Dorsolateral prefrontal cortex (tissue), 120 donors: ENCODE measurements at regions of chr7 and their contacts with region 1.

Region 1: DNA sequence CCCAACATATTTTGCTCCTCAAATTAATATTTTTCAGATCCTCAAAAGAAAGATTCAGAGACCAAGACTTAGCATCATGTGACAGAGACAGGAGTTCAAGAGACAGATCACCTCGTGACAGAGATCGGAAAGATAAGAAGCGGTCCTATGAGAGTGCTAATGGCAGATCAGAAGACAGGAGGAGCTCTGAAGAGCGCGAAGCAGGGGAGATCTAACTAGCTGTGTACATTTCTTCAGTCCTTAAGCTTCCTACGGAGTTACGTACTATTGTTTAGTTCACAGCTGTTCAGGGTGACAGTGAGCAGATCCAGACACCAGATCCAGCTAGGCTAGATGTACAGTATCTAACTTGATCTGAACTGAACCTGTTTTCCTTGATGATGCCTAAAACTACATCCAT is 61.3 kb downstream of the KLRG2 start:
- DNase-seq: no peak
- H3K4me3 ChIP-seq: peak overlapping the region in 2 of 59 donors; percentile 16 to 17
- H3K27ac ChIP-seq: peak overlapping the region in 58 of 59 donors; percentile 46 to 96 (median 86)
- H3K27me3 ChIP-seq: no peaks in the 10 kb centered on the region
- CTCF ChIP-seq: peak in 10 of 56 donors; percentile 3 to 38 (median 13)

Region 2: DNA sequence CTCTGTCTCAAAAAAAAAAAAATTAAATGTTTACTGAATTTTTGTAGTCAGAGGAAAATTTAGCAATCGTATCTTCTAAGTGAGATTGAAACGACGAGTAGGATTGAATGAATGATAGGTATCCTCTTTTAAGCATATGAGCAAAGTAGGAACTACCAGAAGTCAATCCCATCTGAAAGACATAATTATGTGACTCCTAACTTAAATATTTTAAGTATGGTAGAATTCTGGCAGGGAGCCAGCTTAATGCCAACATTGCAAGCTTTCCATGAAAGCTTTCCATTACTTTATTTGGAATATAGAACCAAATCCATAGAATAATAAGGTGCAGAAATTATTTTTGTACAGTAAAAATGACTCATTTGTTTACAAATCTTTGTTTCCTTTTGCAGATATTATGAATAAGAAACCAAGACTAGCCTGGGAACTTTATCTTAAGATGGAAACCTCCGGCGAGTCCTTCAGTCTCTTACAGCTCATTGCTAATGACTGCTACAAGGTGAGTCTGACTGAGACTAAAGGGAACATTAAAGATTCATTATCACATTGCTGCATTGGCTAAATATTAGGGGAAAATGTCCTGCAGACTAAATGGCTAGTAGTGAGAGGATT is 241.3 kb before region 1 on chr7:
- intact Hi-C with region 1: no loop called
- DNase-seq: no peak
- H3K4me3 ChIP-seq: no peak overlapping the region
- H3K27ac ChIP-seq: no peak overlapping the region
- H3K27me3 ChIP-seq: no peaks in the 10 kb centered on the region
- CTCF ChIP-seq: no peak

Region 3: GRCh38 chr7:139370301-139370942 is 51.7 kb before region 1 on chr7:
- intact Hi-C with region 1: loop called in 1 of 2 experiments (anchors 5 kb)
- DNase-seq: no peak
- H3K4me3 ChIP-seq: peak overlapping the region in 6 of 59 donors; percentile 2 to 14 (median 5)
- H3K27ac ChIP-seq: peak overlapping the region in 51 of 59 donors; percentile 2 to 85 (median 59)
- H3K27me3 ChIP-seq: no peaks in the 10 kb centered on the region
- CTCF ChIP-seq: no peak